ENCODE measurements at regions of chr9 and their contacts with region 1.

Region 1: GRCh38 chr9:87950765-87951488 is 23.4 kb downstream of the CDK20 start:
- DNase-seq: peak; percentile 68
- H3K4me3 Mint-ChIP-seq: no peak overlapping the region
- H3K27ac Mint-ChIP-seq: no peak overlapping the region
- H3K4me1 Mint-ChIP-seq: peaks cover 2% of the 10 kb centered on the region
- H3K27me3 Mint-ChIP-seq: peaks cover 25% of the 10 kb centered on the region

Region 2: GRCh38 chr9:87803622-87804345 is 147.1 kb before region 1 on chr9:
- intact Hi-C with region 1: no loop called
- DNase-seq: no peak
- H3K4me3 Mint-ChIP-seq: no peak overlapping the region
- H3K27ac Mint-ChIP-seq: no peak overlapping the region
- H3K4me1 Mint-ChIP-seq: no peaks in the 10 kb centered on the region
- H3K27me3 Mint-ChIP-seq: peaks cover 7% of the 10 kb centered on the region

Region 3: GRCh38 chr9:88741335-88741734 is 790.4 kb after region 1 on chr9:
- intact Hi-C with region 1: loop called (anchors 5 kb)
- DNase-seq: peak; percentile 68
- H3K4me3 Mint-ChIP-seq: no peak overlapping the region
- H3K27ac Mint-ChIP-seq: no peak overlapping the region
- H3K4me1 Mint-ChIP-seq: no peaks in the 10 kb centered on the region
- H3K27me3 Mint-ChIP-seq: peaks cover 12% of the 10 kb centered on the region

Measured in activated CD4-positive, alpha-beta T cell treated with anti-CD3 and anti-CD28 coated beads, Interleukin-2, amount 10 ng/mL, durations not matched to agents 24 days and 14 days (primary cell).